AG04449 (cell line): ENCODE measurements at regions of chr2 and their contacts with region 1.

Region 1: DNA sequence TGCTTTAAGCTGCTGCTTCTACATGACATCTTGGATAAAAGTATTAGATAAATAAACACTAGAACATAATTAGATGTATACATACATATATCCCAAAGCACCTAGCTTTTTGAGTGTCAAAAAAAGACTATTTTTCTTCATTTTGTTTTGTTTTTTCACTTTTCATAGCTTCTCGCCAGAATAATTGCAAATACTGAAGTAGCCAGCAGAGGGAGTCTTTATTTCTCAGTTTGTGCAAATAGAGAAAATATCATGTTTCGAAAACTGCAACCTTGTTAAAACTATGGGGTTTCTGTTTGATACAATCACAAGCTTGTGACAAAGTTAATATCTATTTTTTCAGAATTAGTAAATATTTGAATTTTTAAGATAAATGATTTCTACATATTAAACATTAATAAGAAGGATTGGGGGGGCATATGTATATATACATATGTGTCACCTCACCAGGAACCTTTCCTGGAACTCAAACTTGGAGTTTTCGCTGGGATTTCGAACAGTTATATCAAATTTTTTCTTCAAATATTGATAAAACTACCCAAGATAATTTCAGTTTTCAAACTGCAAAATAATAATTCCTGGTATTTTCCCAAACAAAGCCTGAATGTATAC is 61.0 kb downstream of the GRB14 start:
- DNase-seq: no peak
- H3K4me3 ChIP-seq: no peak overlapping the region
- CTCF ChIP-seq: peak; percentile 52

Region 2: DNA sequence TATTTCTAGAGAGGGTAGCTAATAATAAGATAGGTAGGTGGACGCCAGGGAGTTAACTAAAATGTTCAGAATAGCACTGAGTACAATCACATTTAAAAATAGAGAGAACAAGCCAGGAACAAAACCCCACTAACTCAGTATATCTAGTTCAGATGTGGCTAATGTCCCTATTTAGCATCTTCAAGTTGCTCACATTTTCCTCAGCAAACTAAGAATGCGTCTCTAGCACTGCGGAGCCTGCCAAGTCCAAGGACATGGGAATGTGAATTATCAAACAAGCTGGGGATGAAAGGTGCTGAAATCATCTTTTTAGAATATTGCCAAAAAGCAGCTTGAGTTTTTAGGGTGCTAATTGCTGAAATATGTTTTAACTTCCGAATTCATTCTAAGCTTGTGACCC is 426.0 kb before region 1 on chr2:
- CTCF ChIA-PET with region 1: no interaction called
- POLR2A ChIA-PET with region 1: no interaction called
- DNase-seq: no peak
- H3K4me3 ChIP-seq: no peak overlapping the region
- CTCF ChIP-seq: no peak

Region 3: GRCh38 chr2:164287056-164287455 is 273.2 kb before region 1 on chr2:
- CTCF ChIA-PET with region 1: no interaction called
- POLR2A ChIA-PET with region 1: no interaction called
- DNase-seq: no peak
- H3K4me3 ChIP-seq: no peak overlapping the region
- CTCF ChIP-seq: no peak

Region 4: DNA sequence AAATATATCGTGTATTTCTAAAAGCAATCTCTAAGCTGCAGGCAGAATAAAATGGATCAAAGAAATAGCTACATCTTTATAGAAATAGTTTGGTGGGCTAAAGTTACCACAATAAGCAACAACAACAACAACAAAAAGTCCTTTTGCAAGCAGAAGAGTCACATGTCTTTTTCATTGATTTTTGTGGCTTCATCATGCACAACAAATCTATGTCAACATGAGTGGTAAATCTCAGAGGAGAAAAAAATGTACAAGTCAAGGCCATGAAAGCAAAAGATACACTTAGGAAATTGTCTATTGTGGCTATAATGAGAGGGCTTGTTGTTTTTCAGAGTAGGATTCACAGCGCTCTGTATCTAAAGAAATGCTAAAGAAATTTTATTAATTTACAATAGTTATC is 208.8 kb before region 1 on chr2:
- CTCF ChIA-PET with region 1: no interaction called
- POLR2A ChIA-PET with region 1: no interaction called
- DNase-seq: no peak
- H3K4me3 ChIP-seq: no peak overlapping the region
- CTCF ChIP-seq: no peak

Region 5: GRCh38 chr2:164574925-164575324 is 14.6 kb after region 1 on chr2:
- CTCF ChIA-PET with region 1: interaction called, 63 read pairs
- POLR2A ChIA-PET with region 1: no interaction called
- DNase-seq: no peak
- H3K4me3 ChIP-seq: no peak overlapping the region
- CTCF ChIP-seq: no peak

Region 6: DNA sequence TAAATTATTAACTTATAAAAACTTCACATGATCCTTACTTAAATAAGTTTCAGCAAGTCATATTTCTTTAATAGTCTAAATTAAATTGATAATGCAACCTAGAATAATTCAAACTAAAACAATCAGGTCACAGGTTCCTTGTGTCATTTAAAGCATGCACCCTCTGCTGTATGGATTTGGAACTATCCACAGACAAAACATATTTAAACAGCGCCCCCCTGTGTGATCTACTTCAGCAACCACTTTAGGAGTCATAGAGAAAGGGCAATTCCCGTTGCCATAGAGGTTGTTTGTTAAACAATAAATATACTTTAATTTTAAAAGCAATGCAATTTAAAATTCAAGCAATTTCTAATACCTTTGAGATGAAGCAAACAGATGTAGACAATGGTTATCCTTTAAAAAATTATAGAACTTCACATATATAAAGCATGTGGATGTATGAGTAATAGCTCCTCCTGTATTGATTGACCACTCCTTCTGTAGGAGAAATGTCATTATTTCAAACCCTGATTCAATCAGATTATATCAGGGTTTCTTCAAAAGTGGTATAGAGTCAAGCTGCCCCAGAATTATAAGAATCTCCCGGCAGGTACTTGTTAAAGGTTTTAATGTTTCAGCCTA is 39.8 kb after region 1 on chr2:
- CTCF ChIA-PET with region 1: interaction called, 29 read pairs
- POLR2A ChIA-PET with region 1: no interaction called
- DNase-seq: peak; percentile 19
- H3K4me3 ChIP-seq: no peak overlapping the region
- CTCF ChIP-seq: peak; percentile 74

Region 7: GRCh38 chr2:164692114-164692513 is 131.8 kb after region 1 on chr2:
- CTCF ChIA-PET with region 1: interaction called, 10 read pairs
- POLR2A ChIA-PET with region 1: no interaction called
- DNase-seq: no peak
- H3K4me3 ChIP-seq: no peak overlapping the region
- CTCF ChIP-seq: no peak

Region 8: DNA sequence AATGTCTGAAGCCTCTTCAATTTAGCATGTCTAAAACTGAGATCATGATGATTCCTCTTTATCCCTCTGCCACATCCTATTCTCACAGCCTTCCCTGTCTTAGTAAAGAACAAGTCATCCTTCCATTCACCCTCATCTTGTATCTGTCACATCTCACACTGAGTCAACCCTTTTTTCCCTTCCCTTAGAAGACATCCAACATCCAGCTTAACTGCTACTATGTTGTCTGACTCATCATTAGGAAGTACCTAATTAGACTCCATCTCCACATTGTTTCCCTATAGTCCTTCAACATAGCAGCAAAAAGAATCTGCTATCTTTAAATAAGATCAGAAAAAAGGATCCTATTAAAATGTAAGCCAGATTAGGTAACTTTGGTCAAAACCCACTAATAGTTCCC is 146.2 kb after region 1 on chr2:
- CTCF ChIA-PET with region 1: interaction called, 22 read pairs
- POLR2A ChIA-PET with region 1: no interaction called
- DNase-seq: peak; percentile 50
- H3K4me3 ChIP-seq: no peak overlapping the region
- CTCF ChIP-seq: no peak